ENCODE measurements at regions of chr12 and their contacts with region 1.

Region 1: GRCh38 chr12:106345739-106346138 is 11.8 kb upstream of the POLR3B start:
- DNase-seq: no peak
- H3K4me3 ChIP-seq: no peak overlapping the region
- H3K27ac ChIP-seq: no peak overlapping the region
- H3K4me1 ChIP-seq: no peaks in the 10 kb centered on the region
- H3K27me3 ChIP-seq: no peaks in the 10 kb centered on the region
- CTCF ChIP-seq: peak; percentile 57 to 79 (median 57)
- EP300 ChIP-seq: no peak
- POLR2A ChIP-seq: no peak
- RAD21 ChIP-seq: peak; percentile 73 to 77

Region 2: DNA sequence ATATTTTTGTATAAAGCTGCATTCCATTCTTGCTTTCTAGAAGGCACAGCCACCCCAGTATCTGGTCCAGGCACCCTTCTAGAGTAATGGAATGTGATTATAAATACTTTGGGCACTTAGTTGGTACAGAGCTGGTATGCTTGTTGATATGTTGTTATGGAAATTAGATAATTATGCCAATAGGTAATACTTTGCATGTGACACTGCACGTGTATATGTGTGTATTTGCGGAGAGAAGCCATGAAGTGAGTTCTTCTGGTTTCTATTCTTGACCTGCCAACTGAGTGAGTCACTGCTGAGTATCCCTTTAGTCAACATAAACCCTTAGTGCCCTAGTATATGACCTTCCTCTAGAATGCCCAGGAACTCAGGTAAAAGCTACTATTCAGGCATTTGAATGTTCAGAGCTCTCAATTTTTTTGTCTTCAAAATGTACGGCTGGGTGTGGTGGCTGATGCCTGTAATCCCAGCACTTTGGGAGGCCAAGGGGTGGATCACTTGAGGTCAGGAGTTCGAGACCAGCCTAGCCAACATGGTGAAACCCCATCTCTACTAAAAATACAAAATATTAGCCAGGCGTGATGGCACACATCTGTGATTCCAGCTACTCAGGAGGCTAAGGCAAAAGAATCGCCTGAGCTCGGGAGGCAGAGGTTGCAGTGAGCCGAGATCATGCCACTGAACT is 49.4 kb before region 1 on chr12:
- CTCF ChIA-PET with region 1: interaction called, 11 read pairs
- POLR2A ChIA-PET with region 1: no interaction called
- DNase-seq: no peak
- H3K4me3 ChIP-seq: no peak overlapping the region
- H3K27ac ChIP-seq: no peak overlapping the region
- H3K4me1 ChIP-seq: peaks cover 0 to 4% (median under 1%) of the 10 kb centered on the region in 4 experiments; a peak in 3 of 7 replicates
- H3K27me3 ChIP-seq: no peaks in the 10 kb centered on the region
- CTCF ChIP-seq: no peak
- EP300 ChIP-seq: no peak
- POLR2A ChIP-seq: no peak
- RAD21 ChIP-seq: no peak

Region 3: DNA sequence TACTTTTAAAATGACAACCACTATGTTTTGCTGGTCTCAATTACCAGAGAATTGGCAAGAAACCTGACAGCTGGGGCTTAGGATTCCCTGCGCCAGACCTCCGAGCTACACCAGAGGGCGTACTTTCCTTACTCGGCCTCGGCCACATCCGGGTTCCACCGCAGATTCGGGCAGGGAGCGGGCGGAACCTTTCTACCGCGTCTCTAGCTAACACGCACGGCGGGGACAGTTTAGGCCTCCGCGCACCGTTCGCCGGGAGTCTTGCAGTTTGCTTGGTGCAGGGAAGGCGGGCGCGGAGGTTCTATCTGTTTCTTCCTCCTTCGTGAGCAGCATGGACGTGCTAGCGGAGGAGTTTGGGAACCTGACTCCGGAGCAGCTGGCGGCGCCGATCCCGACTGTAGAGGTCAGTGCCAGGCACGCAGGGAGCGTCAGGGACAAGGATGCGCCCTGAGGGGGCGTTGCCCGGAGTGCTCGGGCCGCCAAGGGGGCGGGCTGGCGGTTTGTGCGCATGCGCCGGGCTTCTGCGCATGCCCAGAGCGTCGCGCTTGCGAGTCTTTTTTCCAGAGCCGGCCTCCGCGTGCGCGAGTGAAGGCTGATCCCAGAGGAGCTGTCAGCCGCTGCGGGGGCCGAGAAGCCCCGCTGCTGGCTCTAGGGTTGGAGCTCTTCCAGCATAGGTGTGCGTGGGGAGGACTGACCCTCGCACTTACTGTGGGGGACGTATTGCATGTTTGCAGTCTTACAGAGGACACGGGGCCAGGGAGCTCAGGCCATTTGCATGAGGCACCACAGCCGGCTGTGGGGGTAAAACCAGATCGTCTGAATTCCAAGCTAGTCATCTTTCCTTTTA is 12.0 kb after region 1 on chr12 and contains the start of gene POLR3B:
- CTCF ChIA-PET with region 1: interaction called, 16 read pairs
- POLR2A ChIA-PET with region 1: interaction called, 3 read pairs
- DNase-seq: peak; percentile 81 to 94
- H3K4me3 ChIP-seq: peak within 1 kb of the TSS; percentile 64 to 91 (median 84)
- H3K27ac ChIP-seq: peak within 1 kb of the TSS; percentile 90
- H3K4me1 ChIP-seq: peaks cover 0 to 3% (median under 1%) of the 10 kb centered on the region in 4 experiments; a peak in 4 of 7 replicates
- H3K27me3 ChIP-seq: no peaks in the 10 kb centered on the region
- CTCF ChIP-seq: peak; percentile 86 to 89 (median 87)
- EP300 ChIP-seq: 0 out of 3 replicates have a peak, but pooled peaks of 1 of the 2 experiments have one; percentile 32
- POLR2A ChIP-seq: peak in 1 of 2 experiments; percentile 77; a peak in 2 of 3 replicates
- RAD21 ChIP-seq: peak; percentile 85
- total RNA-seq, gene POLR3B: 13.0 and 13.2 TPM in 2 replicates

Measured in H1 (cell line).